CD8-positive, alpha-beta memory T cell (primary cell): ENCODE measurements at regions of chr5 and their contacts with region 1.

Region 1: GRCh38 chr5:52948418-52949076 is 40.6 kb upstream of the ITGA2 start:
- DNase-seq: peak; percentile 19 to 73 (median 58)
- H3K4me3 ChIP-seq: no peak overlapping the region
- H3K4me3 Mint-ChIP-seq: no peak overlapping the region
- H3K27ac ChIP-seq: no peak overlapping the region
- H3K27ac Mint-ChIP-seq: peak overlapping the region in 2 of 8 donors; percentile 15 to 41
- H3K4me1 ChIP-seq: peaks cover 3% of the 10 kb centered on the region
- H3K4me1 Mint-ChIP-seq: peaks cover 14 to 25% (median 23%) of the 10 kb centered on the region in 3 donors
- H3K27me3 ChIP-seq: no peaks in the 10 kb centered on the region
- H3K27me3 Mint-ChIP-seq: peaks cover 0 to 4% of the 10 kb centered on the region in 2 donors

Region 2: DNA sequence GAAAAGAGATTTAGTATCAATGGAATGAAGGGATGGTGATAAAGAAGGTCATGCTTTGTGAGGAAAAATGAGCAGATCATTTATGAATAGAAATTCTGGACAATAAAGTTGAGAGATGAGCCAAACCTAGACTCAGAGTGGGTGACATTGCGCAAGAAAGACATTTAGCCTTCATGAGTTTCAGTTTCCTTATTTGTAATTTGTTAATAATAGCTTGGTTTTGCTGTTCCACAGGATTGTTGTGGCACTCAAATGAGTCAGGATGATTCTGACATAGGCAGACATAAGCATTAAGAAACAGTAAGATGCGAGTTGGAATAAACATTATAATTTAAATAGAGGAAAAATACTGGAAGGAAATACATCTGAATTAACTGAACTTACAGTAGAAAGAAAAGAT is 75.4 kb after region 1 on chr5:
- CTCF ChIA-PET with region 1: no interaction called
- POLR2A ChIA-PET with region 1: no interaction called
- DNase-seq: no peak
- H3K4me3 ChIP-seq: no peak overlapping the region
- H3K4me3 Mint-ChIP-seq: no peak overlapping the region
- H3K27ac ChIP-seq: no peak overlapping the region
- H3K27ac Mint-ChIP-seq: no peak overlapping the region
- H3K4me1 ChIP-seq: no peaks in the 10 kb centered on the region
- H3K4me1 Mint-ChIP-seq: no peaks in the 10 kb centered on the region
- H3K27me3 ChIP-seq: no peaks in the 10 kb centered on the region
- H3K27me3 Mint-ChIP-seq: peaks cover 0 to 4% of the 10 kb centered on the region in 2 donors

Region 3: GRCh38 chr5:53095931-53096525 is 147.5 kb after region 1 on chr5:
- CTCF ChIA-PET with region 1: interaction called, 24 read pairs
- POLR2A ChIA-PET with region 1: no interaction called
- DNase-seq: peak; percentile 41 to 69 (median 51)
- H3K4me3 ChIP-seq: no peak overlapping the region
- H3K4me3 Mint-ChIP-seq: no peak overlapping the region
- H3K27ac ChIP-seq: no peak overlapping the region
- H3K27ac Mint-ChIP-seq: peak overlapping the region in 2 of 8 donors; percentile 30 to 44
- H3K4me1 ChIP-seq: no peaks in the 10 kb centered on the region
- H3K4me1 Mint-ChIP-seq: peaks cover 0 to 2% (median 0%) of the 10 kb centered on the region in 3 donors
- H3K27me3 ChIP-seq: no peaks in the 10 kb centered on the region
- H3K27me3 Mint-ChIP-seq: no peaks in the 10 kb centered on the region